ENCODE measurements at regions of chr4 and their contacts with region 1.

Region 1: DNA sequence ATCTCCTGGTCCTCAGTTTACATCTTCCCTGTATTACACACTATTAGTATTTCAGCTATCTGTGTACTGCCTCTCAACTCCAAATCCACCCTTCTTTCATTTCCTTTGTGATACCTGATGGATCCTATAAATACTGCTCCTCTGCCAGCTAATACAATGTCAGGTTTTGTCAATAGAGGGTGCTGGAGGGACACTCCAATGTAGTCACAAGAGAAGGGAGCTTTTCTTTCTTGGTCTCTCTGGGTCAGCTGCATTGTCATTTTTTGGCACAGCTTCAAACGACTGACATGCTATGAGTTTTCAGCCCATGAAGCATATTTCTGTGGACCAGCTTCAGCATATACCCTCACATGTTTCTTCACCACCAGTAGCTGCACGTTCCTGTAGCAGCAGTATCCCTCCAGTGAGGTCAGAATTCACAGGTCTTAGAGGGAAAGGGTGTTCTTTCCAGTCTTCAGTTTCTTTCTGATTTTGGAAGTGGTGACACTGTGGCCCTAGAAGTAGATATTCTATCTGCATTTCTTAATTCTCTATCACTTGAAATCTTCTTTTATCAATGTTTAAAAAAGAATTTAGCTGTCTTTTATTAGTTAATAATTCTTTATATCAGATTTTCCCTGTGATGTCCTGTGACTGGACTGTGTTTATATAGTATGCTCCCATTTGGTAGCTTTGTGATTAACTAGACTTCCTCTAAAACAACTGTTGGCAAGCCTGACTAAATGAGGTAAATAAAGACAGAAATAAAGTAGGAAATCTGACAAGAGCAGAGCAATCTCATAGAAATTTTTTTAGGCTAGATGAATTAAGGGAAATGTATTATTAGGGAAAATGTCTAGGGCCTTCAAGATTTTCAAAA is 60.6 kb downstream of the GABRA2 start:
- DNase-seq: peak; percentile 25
- ATAC-seq: peak; percentile 100
- H3K4me3 Mint-ChIP-seq: no peak overlapping the region
- H3K27ac Mint-ChIP-seq: no peak overlapping the region
- H3K4me1 Mint-ChIP-seq: peaks cover 9% of the 10 kb centered on the region
- H3K27me3 Mint-ChIP-seq: no peaks in the 10 kb centered on the region
- CTCF ChIP-seq: peak; percentile 37

Region 2: DNA sequence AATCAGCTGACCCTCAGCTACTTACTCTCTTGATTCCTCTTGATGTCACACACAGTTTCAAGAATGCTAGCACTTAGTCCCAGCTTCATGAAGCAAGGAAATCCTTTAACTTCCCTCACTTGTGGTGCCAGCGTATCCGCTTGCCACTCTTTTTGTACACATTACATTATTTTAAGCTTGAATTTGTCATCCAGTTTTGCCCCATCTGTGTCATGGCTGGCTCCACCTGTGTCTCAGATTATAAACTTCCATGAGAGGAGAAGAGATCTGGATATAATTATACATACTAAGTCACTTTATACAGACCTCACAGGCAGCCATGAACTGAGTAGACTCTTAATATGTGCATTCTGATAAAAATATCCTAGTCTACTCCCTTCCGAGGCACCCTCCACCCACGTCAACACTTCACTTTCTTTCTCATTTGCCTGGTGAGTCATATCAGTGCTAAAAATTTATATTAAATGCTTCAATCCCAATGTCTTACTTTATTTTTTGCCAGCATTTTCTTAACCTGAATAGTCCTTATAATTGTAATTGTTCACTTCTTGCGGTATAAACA is 25.4 kb after region 1 on chr4:
- CTCF ChIA-PET with region 1: no interaction called
- POLR2A ChIA-PET with region 1: no interaction called
- DNase-seq: no peak
- ATAC-seq: no peak
- H3K4me3 Mint-ChIP-seq: no peak overlapping the region
- H3K27ac Mint-ChIP-seq: no peak overlapping the region
- H3K4me1 Mint-ChIP-seq: peaks cover 12% of the 10 kb centered on the region
- H3K27me3 Mint-ChIP-seq: no peaks in the 10 kb centered on the region
- CTCF ChIP-seq: no peak

Region 3: GRCh38 chr4:46389301-46389775 is 60.0 kb after region 1 on chr4:
- CTCF ChIA-PET with region 1: interaction called, 28 read pairs
- POLR2A ChIA-PET with region 1: no interaction called
- DNase-seq: peak; percentile 24
- ATAC-seq: peak; percentile 51
- H3K4me3 Mint-ChIP-seq: peak overlapping the region; percentile 90
- H3K27ac Mint-ChIP-seq: no peak overlapping the region
- H3K4me1 Mint-ChIP-seq: peaks cover 19% of the 10 kb centered on the region
- H3K27me3 Mint-ChIP-seq: peaks cover 58% of the 10 kb centered on the region
- CTCF ChIP-seq: no peak

Region 4: DNA sequence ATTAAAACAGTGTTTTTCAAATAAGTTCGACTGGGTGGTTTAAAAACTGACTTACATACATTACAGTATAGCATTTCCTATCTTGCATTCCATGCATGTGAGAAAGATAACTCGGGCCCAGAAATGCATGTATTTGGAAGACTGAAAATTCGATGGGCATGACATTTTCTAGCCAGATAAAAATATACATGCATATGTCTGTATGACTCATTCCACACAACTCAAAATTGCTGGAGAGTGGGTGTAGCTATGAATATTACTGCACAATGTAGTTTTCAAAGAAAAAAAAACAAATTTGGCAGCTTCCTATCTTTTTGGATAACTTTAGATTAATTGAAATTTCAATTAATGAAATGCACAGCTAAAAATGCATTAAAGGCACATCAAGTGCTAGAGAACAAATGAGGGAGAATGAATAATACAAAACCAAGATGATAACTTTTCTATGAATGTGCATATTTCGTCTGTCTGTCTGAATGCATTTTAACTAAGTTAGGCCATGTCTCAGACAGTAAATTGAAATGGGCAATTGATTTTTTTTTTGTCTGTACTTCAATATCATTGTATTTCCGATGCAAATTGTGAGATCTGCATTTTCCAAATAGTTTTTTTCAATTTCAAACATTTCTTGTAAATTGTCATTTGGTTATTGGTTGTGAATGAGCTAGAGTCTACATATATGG is 115.1 kb after region 1 on chr4:
- CTCF ChIA-PET with region 1: no interaction called
- POLR2A ChIA-PET with region 1: no interaction called
- DNase-seq: no peak
- ATAC-seq: no peak
- H3K4me3 Mint-ChIP-seq: no peak overlapping the region
- H3K27ac Mint-ChIP-seq: no peak overlapping the region
- H3K4me1 Mint-ChIP-seq: no peaks in the 10 kb centered on the region
- H3K27me3 Mint-ChIP-seq: no peaks in the 10 kb centered on the region
- CTCF ChIP-seq: no peak

Region 5: DNA sequence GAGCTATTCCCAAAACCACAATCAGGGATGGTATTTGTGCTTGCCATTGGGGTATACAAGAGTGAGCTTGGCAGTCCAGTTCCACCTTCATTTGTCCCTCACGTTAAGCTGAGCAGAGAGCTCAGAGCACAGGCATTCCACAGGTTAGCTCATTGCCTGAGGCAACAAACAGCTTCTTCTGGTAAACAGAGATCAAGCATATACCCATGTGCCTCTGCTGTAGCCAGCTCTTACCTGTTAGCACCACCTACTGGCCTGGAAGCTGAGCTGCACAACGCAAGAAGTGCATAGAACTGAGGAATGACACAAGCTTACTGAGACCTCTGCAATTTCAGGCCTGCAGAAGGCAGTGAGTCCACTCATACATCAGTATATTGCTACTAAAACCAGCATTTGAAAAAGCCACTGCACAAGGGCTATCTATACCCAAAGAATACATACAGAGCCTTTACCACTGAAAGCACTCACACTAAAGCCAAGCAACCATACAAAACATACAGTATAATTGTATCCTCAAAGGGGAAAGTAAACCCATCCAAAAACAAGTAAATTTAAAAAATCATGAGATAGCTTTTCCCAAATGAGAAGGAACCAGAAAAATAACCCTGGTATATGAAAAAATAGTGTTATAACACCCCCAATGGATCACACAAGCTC is 318.9 kb after region 1 on chr4:
- CTCF ChIA-PET with region 1: interaction called, 179 read pairs
- POLR2A ChIA-PET with region 1: no interaction called
- DNase-seq: peak; percentile 63
- ATAC-seq: peak; percentile 99
- H3K4me3 Mint-ChIP-seq: no peak overlapping the region
- H3K27ac Mint-ChIP-seq: no peak overlapping the region
- H3K4me1 Mint-ChIP-seq: 0 out of 2 replicates have a peak, but pooled peaks cover 5% of the 10 kb centered on the region
- H3K27me3 Mint-ChIP-seq: no peaks in the 10 kb centered on the region
- CTCF ChIP-seq: peak; percentile 63

Measured in WTC11 (cell line).